ENCODE measurements at regions of chr6 and their contacts with region 1.

Region 1: DNA sequence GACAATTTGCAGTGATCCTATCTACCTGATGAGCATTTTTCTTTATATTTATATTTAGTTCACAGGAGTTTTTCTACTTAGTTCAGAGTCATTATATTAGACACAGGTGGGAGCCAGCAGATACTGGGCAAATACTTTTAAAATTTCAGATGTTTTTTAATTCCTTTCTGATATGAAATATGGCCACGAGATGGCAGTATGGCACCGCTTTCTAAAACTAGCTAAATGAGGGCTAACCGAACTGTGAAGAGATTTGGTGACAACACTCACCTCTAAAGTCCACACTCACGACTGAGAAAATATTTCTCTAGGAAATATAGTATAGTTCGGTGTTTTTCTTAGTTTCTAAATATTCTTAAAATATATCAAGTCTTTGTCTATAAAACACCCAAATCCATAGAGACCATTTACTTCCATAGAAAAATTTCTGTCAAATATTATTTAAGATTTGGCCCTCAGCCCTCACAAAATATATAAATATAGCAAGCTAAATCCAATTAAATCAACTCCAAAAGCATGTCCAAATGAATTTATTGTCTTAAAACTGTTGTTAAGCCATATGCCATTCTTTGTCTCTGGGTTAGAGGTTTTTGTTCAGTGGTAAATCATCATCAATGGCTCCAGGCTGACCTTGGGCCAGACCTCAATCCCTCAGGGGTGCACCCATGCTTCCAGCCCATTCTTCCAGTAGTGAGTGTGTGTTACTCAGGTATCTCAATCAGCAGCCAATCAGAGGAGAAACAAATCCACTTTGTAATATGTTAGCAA is 63.6 kb downstream of the HUS1B start:
- DNase-seq: peak in 2 of 3 donors; percentile 27 to 65
- ATAC-seq: peak in 1 of 2 donors; percentile 49
- H3K4me3 ChIP-seq: no peak overlapping the region
- H3K27ac ChIP-seq: no peak overlapping the region
- H3K4me1 ChIP-seq: no peaks in the 10 kb centered on the region
- H3K27me3 ChIP-seq: no peaks in the 10 kb centered on the region

Region 2: DNA sequence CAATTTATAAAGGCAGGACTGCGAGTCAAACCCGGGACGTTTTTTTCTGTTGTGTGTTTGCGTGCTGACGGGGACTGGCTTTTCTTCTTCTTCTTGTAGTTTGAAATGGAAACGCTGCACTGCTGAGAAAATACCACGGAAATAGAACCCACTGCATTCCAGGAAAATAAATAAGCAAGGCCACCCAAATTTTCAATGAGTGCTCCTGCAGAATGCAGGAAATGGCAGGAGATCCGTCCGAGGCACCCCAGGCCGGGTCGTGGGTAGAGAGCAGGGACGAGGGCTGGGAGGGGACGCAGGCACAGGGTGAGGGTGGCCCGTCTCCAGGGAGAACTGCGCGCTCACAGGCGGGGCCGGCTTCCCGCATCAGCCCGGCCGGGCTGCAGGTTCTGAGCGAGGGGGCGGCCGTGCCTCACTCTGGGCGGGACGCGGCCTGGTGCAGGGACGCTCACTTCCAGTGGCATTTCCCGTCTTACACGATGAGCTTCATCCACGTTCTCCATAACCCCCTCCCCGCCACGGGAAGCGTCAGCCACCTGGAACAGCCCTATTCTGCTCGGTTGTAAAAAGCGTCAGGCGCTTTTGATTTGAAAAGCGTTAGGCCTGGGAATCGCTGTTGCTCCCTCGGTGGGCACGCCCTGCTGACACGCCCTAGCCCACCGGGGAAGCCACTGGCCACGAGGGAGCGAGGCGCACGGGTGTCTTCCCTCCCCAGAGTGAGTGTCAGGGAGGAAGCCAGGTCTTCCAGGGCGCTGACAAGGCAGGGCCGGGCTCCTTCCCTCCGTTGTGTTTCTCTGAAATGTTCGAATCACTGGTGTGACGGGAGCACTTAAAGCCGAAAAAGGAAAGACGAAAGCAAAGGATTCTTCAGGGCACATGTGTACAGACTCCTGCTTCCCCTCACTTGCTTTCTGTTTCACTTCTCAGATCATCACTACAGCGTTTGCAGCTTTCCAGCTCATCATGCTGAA is 117.6 kb after region 1 on chr6:
- intact Hi-C with region 1: loop called in 1 of 4 experiments (anchors 10 kb)
- DNase-seq: peak; percentile 57 to 83 (median 83)
- ATAC-seq: peak; percentile 92 to 94
- H3K4me3 ChIP-seq: peak overlapping the region; percentile 52
- H3K27ac ChIP-seq: peak overlapping the region; percentile 59
- H3K4me1 ChIP-seq: no peaks in the 10 kb centered on the region
- H3K27me3 ChIP-seq: no peaks in the 10 kb centered on the region

Region 3: DNA sequence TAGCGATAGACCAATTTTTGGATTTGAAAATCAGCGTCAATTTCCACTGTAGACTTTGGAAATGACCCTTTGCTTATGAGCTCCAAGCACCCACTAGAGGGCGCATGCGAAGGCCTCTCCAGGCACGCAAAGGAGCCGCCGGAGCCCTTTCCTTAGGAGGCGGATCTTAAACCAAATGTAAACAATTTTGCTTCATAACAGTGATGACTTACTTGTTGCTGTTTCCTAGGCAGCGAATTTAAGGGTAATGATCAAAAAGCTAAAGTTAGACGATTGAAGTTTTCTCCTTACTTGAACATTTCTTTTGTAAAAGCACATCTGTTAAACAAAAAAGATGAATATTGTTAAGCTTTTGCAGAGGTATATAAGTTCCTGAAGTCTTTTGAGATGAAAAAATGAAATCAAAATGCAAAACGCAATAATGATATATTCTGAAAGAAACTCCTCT is 128.8 kb after region 1 on chr6:
- intact Hi-C with region 1: loop called in 2 of 4 experiments (anchors 10 kb)
- DNase-seq: peak; percentile 72 to 89 (median 76)
- ATAC-seq: peak; percentile 70 to 73
- H3K4me3 ChIP-seq: no peak overlapping the region
- H3K27ac ChIP-seq: no peak overlapping the region
- H3K4me1 ChIP-seq: no peaks in the 10 kb centered on the region
- H3K27me3 ChIP-seq: peaks cover 2% of the 10 kb centered on the region

Region 4: GRCh38 chr6:797479-798077 is 204.3 kb after region 1 on chr6:
- intact Hi-C with region 1: loop called in 2 of 4 experiments (anchors 5 to 10 kb)
- DNase-seq: peak in 1 of 3 donors; percentile 26
- ATAC-seq: peak; percentile 52 to 56
- H3K4me3 ChIP-seq: no peak overlapping the region
- H3K27ac ChIP-seq: no peak overlapping the region
- H3K4me1 ChIP-seq: no peaks in the 10 kb centered on the region
- H3K27me3 ChIP-seq: no peaks in the 10 kb centered on the region

Region 5: GRCh38 chr6:1381481-1382330 is 788.4 kb after region 1 on chr6:
- intact Hi-C with region 1: loop called in 1 of 4 experiments (anchors 5 kb)
- DNase-seq: peak in 2 of 3 donors; percentile 77 to 78
- ATAC-seq: peak; percentile 74 to 75
- H3K4me3 ChIP-seq: peak overlapping the region; percentile 48
- H3K27ac ChIP-seq: no peak overlapping the region
- H3K4me1 ChIP-seq: no peaks in the 10 kb centered on the region
- H3K27me3 ChIP-seq: peaks cover 2% of the 10 kb centered on the region

Region 6: DNA sequence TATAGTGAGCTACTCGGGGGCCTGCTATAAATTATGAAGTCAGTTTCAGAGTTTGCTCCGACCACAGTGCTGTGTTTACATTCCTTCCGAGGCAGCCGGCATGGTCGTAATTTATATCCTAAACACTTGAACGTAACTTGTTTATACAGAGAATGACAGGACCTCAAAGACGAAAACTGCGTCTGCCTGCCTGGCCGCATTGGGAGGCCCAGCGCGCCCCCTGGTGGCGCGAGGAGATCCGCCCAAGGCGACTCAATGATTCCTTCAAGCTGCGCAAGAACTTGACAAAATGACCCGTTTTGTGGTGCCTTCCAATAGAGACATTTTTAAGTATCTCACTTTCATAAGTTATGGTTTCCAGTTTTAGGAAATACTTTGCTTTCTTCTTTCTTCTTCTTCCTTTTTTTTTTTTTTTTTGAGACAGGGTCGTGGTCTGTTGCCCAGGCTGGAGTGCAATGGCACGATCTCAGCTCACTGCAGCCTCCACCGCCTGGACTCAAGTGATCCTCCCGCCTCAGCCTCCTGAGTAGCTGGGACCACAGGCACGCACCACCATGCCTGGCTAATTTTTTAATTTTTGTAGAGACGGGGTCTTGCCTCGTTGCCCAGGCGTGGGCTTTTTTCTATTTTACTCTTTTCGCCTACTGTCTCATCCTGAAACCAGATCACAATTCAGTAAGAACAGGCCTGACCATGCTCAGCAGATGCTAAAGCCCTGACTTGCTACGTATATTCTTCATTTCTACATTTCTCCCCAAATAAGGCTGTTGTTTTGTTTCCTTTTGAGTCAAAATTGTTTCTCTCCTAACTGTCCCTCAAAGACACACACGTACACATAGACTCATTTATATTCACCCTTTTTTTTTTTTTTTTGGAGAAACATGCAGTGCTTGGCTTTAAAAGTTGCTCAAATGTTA is 803.9 kb after region 1 on chr6:
- intact Hi-C with region 1: loop called in 2 of 4 experiments (anchors 5 to 10 kb)
- DNase-seq: peak; percentile 62 to 90 (median 85)
- ATAC-seq: peak; percentile 51 to 79
- H3K4me3 ChIP-seq: no peak overlapping the region
- H3K27ac ChIP-seq: no peak overlapping the region
- H3K4me1 ChIP-seq: no peaks in the 10 kb centered on the region
- H3K27me3 ChIP-seq: no peaks in the 10 kb centered on the region

Measured in right cardiac atrium (tissue), 5 donors.